ENCODE measurements at regions of chr11 and their contacts with region 1.

Region 1: DNA sequence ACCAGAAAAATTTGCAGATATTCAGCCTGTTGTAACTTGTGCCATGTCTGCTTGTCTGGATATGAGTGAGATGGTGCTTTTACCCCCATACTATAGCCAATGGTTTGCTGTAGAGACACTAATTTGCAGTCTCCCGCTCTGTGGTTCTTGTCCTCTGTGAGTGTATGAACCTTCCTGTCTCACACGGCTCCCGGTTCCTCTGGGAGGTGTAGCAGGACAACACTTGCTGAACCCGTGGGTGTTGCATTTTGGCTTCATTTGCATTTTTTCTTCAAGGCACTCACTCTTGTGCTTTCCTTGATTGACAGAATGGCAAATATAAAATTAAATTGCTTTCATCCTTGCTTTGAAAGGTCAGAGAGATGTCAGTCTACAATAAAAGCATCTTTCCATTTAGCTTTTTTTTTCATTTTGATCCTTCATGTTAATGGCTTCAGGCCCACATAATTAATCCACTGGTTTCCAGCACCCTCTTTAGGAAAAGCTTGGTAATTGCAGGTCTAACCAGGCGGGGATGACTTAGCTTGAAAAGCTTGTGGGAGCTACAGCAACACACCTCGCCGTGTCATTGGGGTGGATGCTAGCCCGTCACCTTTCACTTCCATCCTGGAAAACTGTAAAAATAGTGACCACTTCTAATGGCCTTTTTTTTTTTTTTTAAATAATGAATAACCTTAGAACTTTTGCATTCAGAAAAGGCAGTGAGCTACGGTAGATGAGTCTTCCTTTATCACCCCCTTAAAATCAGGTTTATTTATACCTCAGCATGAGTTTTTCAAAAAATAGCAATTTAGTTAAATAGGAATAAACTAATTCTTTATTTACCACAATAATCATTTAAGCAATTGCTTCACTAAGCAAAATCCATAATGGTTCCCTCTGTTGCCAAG is 27.4 kb upstream of the ST14 start:
- DNase-seq: no peak
- H3K4me3 ChIP-seq: no peak overlapping the region
- H3K27me3 ChIP-seq: no peaks in the 10 kb centered on the region
- CTCF ChIP-seq: peak; percentile 76

Region 2: DNA sequence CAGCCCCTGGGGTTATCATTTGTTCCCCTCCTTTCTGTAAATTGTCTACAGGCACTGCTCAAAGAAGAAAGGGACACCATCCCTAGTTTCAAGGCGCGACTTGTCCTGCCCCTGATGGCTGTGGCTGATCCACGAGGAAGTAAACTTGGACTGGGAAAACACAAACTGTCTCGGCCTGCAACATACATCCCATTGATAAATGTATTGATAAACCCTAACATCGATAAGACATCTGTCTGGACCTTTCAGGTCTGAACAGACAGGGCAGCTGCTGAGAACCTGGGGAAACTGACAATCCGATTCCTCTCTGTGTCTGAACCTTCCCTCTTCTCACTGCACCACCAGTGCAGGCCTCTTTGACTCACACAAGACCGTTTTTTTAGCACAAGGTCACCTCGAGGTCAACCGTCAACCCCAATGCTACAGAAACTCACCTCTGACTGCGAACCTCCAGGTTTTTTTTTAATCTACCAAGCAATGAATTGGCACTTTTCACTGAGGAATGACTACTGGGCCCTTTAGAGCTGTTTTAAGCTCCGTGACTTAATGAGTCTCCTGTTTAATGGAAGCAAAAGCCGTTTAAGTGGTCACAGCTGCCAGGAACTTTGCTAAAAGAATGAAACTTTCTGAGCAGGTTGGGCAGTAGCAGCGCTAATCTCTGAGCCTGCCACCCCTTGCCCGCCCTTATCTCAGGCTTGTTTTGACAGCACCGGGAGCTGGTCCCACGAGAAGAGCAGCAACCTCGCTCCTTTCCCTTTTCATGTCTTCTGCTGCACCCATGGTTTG is 520.4 kb before region 1 on chr11:
- CTCF ChIA-PET with region 1: no interaction called
- POLR2A ChIA-PET with region 1: no interaction called
- DNase-seq: no peak
- H3K4me3 ChIP-seq: no peak overlapping the region
- H3K27me3 ChIP-seq: peaks cover 3% of the 10 kb centered on the region
- CTCF ChIP-seq: no peak

Region 3: DNA sequence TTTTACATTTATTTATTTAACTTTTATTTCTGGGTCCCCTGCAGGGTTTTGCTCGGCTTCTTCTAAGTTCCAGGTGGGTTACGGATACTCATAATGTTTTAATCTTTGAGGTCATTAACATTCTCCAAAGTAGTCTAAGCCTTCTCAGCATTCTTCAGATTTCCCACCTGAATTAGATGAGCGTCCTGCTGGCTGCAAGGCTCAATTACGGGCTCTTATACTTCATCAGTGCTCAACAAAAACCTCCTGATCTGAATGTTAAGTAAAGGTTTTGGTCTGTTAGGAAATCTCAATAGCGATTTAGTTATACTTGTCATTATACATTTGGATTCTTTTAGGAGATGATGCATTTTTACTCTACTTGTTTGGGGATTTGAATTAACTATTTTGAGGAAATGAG is 209.5 kb before region 1 on chr11:
- CTCF ChIA-PET with region 1: interaction called, 100 read pairs
- POLR2A ChIA-PET with region 1: no interaction called
- DNase-seq: no peak
- H3K4me3 ChIP-seq: no peak overlapping the region
- H3K27me3 ChIP-seq: no peaks in the 10 kb centered on the region
- CTCF ChIP-seq: no peak

Region 4: DNA sequence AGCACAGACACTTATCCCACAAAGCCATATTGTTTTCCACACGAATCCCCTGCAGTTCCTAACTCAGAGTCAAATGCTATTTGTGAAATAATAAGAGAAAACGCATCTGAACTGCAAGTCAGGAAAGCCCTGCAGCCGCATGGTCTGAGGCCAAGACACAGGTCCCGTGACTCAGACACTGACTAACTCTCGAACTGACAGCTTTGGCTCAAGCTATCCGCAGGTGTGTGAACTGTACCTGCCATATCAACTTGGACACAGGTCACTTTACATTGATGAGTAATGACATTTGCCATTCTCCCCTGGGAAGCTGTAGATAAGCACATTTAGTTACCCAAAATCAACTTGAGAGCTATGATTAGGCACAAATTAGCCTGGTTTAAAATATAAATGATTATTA is 201.9 kb before region 1 on chr11:
- CTCF ChIA-PET with region 1: interaction called, 51 read pairs
- POLR2A ChIA-PET with region 1: interaction called, 4 read pairs
- DNase-seq: no peak
- H3K4me3 ChIP-seq: no peak overlapping the region
- H3K27me3 ChIP-seq: no peaks in the 10 kb centered on the region
- CTCF ChIP-seq: no peak

Region 5: DNA sequence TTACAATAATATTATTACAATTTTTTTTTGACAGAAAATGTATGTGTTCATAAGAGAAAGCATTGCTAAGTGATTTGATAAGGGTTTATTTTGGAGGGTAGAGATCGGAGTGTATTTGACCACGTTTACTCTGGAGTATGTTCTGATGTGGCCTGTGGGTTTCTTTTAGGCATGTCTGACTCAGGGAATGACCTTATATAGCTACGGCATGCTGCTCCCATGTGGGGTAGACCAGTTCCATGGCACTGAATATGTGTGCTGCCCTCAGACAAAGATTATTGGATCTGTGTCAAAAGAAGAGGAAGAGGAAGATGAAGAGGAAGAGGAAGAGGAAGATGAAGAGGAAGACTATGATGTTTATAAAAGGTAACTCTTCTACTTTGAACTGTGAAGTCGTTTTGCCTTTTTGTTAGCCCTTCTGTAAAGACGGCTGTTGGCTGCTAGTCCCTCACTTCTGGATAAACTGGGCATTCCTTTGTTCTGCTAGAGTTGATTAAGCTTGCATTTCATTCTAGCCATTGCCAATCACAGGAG is 10.7 kb before region 1 on chr11:
- CTCF ChIA-PET with region 1: interaction called, 10 read pairs
- POLR2A ChIA-PET with region 1: no interaction called
- DNase-seq: no peak
- H3K4me3 ChIP-seq: no peak overlapping the region
- H3K27me3 ChIP-seq: no peaks in the 10 kb centered on the region
- CTCF ChIP-seq: no peak

Region 6: GRCh38 chr11:130145975-130146776 is 14.0 kb after region 1 on chr11:
- CTCF ChIA-PET with region 1: interaction called, 30 read pairs
- POLR2A ChIA-PET with region 1: no interaction called
- DNase-seq: no peak
- H3K4me3 ChIP-seq: no peak overlapping the region
- H3K27me3 ChIP-seq: no peaks in the 10 kb centered on the region
- CTCF ChIP-seq: peak; percentile 22; the same call in 1 of the 2 replicates

Measured in BJ (cell line).